Common myeloid progenitor, CD34-positive (primary cell): ENCODE measurements at regions of chr6 and their contacts with region 1.

Region 1: DNA sequence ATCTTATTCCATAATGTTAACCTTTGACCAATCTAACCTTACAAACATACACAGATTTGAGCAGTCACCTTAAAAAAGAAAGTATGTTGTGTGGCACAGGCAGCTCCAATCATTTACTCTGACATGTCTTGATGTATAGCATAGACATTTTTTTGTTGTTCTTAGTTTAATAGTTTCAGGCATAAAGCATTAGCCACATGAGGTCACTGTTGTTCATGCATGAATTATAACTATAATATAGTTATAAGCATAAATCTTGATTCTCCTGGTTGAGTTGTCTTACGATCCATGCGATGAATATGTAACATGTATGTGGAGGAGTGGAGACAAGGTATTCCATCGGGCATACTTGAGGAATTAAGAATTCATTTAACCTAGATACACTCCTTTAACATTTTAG is 26.1 kb upstream of the NKAIN2 start:
- DNase-seq: peak; percentile 57 to 76 (median 71)
- H3K4me3 ChIP-seq: no peak overlapping the region
- H3K27ac ChIP-seq: no peak overlapping the region
- H3K4me1 ChIP-seq: no peaks in the 10 kb centered on the region
- H3K27me3 ChIP-seq: no peaks in the 10 kb centered on the region

Region 2: GRCh38 chr6:123788319-123788718 is 10.8 kb after region 1 on chr6:
- CTCF ChIA-PET with region 1: interaction called, 14 read pairs
- POLR2A ChIA-PET with region 1: no interaction called
- DNase-seq: no peak
- H3K4me3 ChIP-seq: peak overlapping the region in 2 of 7 experiments; percentile 27 to 63
- H3K27ac ChIP-seq: no peak overlapping the region
- H3K4me1 ChIP-seq: peaks cover 0 to 5% (median 0%) of the 10 kb centered on the region in 4 experiments
- H3K27me3 ChIP-seq: no peaks in the 10 kb centered on the region

Region 3: GRCh38 chr6:124795643-124796463 is 1018.3 kb after region 1 on chr6:
- CTCF ChIA-PET with region 1: interaction called, 24 read pairs
- POLR2A ChIA-PET with region 1: no interaction called
- DNase-seq: peak; percentile 11 to 52 (median 41)
- H3K4me3 ChIP-seq: no peak overlapping the region
- H3K27ac ChIP-seq: no peak overlapping the region
- H3K4me1 ChIP-seq: no peaks in the 10 kb centered on the region
- H3K27me3 ChIP-seq: no peaks in the 10 kb centered on the region